Dorsolateral prefrontal cortex (tissue), 120 donors: ENCODE measurements at regions of chr9 and their contacts with region 1.

Region 1: GRCh38 chr9:122264360-122265148 is at the starts of genes MRRF and RBM18:
- DNase-seq: peak; percentile 83 to 95 (median 88)
- H3K4me3 ChIP-seq: peak within 1 kb of the TSS; percentile 57 to 98 (median 83)
- H3K27ac ChIP-seq: peak within 1 kb of the TSS; percentile 49 to 95 (median 87)
- H3K27me3 ChIP-seq: no peaks in the 10 kb centered on the region
- CTCF ChIP-seq: peak in 28 of 56 donors; percentile 5 to 64 (median 30)
- total RNA-seq, gene MRRF: 21.9 to 44.0 (median 29.3) TPM
- total RNA-seq, gene RBM18: 14.1 to 43.0 (median 29.6) TPM

Region 2: DNA sequence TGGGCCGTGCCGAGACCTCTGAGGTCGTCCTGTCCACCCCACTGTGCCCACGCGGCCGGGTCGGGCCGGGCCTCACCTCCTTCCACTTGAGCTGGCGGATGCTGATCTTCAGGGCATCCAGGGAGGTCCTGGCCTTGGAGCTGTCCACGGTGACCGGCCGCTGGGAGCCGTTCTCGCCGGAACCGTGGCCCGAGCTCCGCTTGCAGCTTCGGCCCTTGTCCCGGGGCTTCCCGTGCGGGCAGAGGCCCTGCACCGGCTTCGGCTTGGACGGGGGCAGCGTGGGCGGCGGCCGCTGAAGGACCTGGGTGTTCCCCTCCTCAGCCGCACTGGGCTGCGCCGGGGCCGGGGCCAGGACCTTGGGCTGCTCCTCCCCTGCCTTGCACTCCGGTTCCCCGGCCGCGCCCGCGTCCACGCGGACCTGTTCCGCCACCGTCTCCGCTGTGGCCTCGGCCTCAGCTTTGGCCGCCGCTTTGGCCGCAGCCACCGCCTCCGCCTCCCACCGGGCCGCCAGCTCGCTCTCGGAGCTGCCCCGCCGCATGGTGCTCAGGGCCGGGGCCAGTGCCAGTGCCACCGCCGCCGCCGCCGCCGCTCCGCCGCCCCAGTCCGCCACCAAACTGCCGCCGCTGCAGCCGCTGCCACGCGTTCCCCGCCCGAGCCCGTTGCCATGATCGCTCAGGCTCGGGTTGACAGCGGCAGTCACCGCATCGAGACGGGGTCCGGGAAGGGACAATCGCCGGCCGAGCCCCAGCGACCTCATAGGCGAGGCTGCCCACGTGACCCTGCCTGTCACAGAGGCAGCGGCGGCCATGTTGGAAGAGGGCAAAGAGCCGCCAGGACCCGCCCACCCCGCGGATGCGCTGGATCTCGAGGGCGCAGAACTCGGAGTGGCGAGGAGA is 171.7 kb before region 1 on chr9 and contains the start of gene TTLL11:
- intact Hi-C with region 1: loop called in 1 of 2 experiments (anchors 10 kb)
- DNase-seq: peak; percentile 97 to 99 (median 98)
- H3K4me3 ChIP-seq: peak within 1 kb of the TSS; percentile 51 to 99 (median 94)
- H3K27ac ChIP-seq: peak within 1 kb of the TSS in 56 of 59 donors; percentile 32 to 98 (median 88)
- H3K27me3 ChIP-seq: no peaks in the 10 kb centered on the region
- CTCF ChIP-seq: peak in 43 of 56 donors; percentile 7 to 61 (median 34)
- total RNA-seq, gene TTLL11: 39.9 to 86.0 (median 58.2) TPM

Region 3: DNA sequence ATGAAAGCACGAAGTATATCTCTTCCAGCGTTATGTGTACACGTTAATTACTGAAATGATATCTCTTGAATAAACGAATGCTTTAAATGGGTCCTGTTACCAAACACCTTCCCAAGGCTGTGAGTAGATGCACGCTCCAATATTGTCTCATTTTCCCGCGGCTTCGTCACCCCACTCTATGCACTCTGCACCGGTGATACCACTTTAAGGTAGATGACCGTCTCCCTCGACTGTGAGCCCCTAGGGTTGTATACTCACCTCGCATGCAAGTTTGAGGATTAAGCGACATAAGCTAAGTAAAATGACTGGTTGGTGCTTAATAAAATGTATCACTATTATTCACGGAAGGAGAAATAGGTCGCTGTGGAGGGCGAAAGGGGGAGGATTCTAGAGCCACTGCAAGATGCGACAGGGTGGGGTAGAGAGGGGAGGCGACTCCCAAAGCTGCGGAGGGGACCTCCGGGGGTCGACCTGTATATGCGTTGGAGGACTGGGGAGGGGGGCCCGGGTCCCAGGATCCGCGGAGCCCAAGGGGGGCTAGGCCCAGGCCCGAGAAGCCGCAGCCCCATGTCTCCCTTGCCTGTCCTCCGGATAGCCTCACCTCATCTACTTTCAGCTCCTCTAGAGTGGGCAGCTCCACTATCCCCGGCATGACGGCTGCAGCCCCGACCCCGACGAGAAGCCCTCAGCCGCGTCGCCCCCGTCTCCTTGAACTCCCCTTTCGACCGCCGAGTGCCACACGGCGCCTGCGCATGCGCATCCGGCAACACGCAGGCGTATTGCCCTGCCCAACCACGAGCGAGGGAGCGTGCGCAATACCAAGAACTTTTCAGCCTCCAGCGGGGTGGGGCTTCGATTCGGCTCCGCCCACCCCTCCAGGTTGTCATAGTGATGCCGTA is 105.3 kb before region 1 on chr9 and contains the starts of genes MORN5 and NDUFA8:
- intact Hi-C with region 1: loop called (anchors 5 kb)
- DNase-seq: peak; percentile 81 to 95 (median 91)
- H3K4me3 ChIP-seq: peak within 1 kb of the TSS; percentile 49 to 100 (median 96)
- H3K27ac ChIP-seq: peak within 1 kb of the TSS in 55 of 59 donors; percentile 30 to 97 (median 87)
- H3K27me3 ChIP-seq: no peaks in the 10 kb centered on the region
- CTCF ChIP-seq: peak in 33 of 56 donors; percentile 6 to 54 (median 31)
- total RNA-seq, gene MORN5: 0.79 to 8.3 (median 3.3) TPM in 116 of 120 experiments, not detected in the others
- total RNA-seq, gene NDUFA8: 50.3 to 125 (median 89.3) TPM

Region 4: DNA sequence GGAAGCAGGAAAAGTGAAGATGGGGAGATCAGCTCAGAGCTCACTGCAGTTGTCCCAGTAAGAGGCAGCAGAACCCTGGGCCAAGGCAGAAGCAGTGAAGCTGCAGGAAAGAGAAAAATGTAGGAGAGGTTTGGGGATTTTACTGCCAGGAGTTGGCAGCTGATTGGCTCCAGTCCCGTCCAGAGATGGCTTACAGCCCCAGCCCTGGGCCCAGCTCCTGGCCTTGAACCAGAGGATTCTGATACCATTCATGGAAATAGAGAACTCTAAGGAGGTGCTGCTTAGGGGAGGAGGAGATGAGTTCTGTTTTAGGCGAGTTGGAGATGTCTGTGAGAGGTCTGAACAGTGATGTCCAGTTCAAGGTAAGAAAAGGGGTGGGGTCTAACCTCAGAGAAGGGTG is 100.3 kb before region 1 on chr9:
- intact Hi-C with region 1: loop called (anchors 5 kb)
- DNase-seq: no peak
- H3K4me3 ChIP-seq: no peak overlapping the region
- H3K27ac ChIP-seq: no peak overlapping the region
- H3K27me3 ChIP-seq: no peaks in the 10 kb centered on the region
- CTCF ChIP-seq: no peak

Region 5: DNA sequence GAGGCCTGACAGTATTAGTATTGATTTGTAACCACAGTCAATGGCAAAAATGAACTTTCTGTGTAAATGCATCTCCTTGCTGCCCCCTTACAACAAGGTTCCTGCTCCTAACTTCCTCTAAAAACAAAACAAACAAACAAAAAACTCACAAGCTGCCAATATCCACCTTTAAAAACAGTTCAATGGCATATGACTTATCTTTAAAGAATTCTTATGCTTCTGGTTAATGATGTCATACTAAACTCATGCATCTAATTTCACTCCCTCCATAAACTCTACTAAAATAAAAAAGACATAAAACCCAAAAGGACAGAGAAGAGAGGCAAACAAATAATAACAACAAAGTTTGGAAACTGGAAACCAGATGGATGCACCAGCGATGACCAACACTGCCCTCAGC is 271.6 kb after region 1 on chr9:
- intact Hi-C with region 1: no loop called
- DNase-seq: no peak
- H3K4me3 ChIP-seq: no peak overlapping the region
- H3K27ac ChIP-seq: no peak overlapping the region
- H3K27me3 ChIP-seq: no peaks in the 10 kb centered on the region
- CTCF ChIP-seq: no peak